ENCODE measurements at regions of chr12 and their contacts with region 1.

Region 1: DNA sequence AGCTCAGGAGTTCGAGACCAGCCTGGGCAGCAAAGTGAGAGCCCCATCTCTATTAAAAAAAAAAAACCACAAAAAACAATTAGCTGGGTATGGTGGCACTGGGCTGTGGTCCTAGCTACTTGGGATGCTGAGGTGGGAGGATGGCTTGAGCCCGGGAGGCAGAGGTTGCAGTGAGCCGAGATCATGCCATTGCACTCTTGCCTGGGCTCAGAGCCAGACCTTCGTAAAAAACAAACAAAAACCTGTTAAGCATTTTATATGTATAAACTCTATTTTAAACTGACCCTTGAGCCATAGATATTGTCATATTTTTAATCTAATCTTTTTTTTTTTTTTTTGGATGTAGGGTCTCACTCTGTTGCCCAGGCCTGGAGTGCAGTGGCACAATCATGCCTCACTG is 35.7 kb downstream of the DNM1L start:
- DNase-seq: peak; percentile 17
- H3K4me3 ChIP-seq: no peak overlapping the region
- H3K27ac ChIP-seq: no peak overlapping the region
- H3K4me1 ChIP-seq: no peaks in the 10 kb centered on the region
- H3K27me3 ChIP-seq: no peaks in the 10 kb centered on the region
- CTCF ChIP-seq: no peak
- EP300 ChIP-seq: no peak
- POLR2A ChIP-seq: no peak

Region 2: DNA sequence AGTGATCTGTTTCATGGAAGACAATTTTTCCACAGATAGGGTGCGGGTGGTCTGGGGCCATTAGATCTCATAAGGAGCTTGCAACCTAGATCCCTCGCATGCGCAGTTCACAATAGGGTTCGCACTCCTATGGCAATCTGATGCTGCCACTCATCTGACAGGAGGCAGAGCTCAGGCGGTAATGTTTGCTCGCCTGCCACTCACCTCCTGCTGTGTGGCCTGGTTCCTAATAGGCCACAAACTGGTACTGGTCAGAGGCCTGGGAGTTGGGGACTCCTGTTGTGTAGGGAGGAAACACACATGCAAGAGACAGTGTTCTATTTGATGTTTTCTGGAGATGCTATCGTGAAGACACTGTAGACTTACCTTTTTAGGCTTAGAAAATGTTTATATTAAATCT is 392.4 kb before region 1 on chr12:
- in situ Hi-C with region 1: no loop called
- intact Hi-C with region 1: no loop called
- DNase-seq: no peak
- H3K4me3 ChIP-seq: no peak overlapping the region
- H3K27ac ChIP-seq: no peak overlapping the region
- H3K4me1 ChIP-seq: no peaks in the 10 kb centered on the region
- H3K27me3 ChIP-seq: no peaks in the 10 kb centered on the region
- CTCF ChIP-seq: no peak
- EP300 ChIP-seq: no peak
- POLR2A ChIP-seq: no peak

Region 3: DNA sequence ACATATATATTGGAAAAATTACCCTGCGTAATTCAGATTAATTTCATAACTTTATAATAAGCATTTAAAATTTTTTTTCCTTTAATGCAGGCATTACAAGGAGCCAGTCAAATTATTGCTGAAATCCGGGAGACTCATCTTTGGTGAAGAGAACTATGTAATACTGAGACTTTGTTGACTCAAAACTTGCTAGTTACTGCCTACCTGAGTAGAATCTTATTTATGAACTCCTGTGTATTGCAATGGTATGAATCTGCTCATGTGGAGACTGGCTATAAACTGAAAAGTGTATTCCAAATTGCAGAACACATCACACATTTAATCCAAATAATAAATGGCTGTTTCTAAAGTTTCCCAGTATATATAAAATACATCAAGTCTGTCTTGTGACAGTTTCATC is 28.5 kb after region 1 on chr12:
- in situ Hi-C with region 1: no loop called
- intact Hi-C with region 1: loop called (anchors 1 kb)
- DNase-seq: no peak
- H3K4me3 ChIP-seq: no peak overlapping the region
- H3K27ac ChIP-seq: no peak overlapping the region
- H3K4me1 ChIP-seq: no peaks in the 10 kb centered on the region
- H3K27me3 ChIP-seq: no peaks in the 10 kb centered on the region
- CTCF ChIP-seq: no peak
- EP300 ChIP-seq: no peak
- POLR2A ChIP-seq: no peak

Measured in transverse colon (tissue), 4 donors.